Activated CD4-positive, alpha-beta memory T cell treated with anti-CD3 and anti-CD28 coated beads for 36 hours (primary cell): ENCODE measurements at regions of chr1 and their contacts with region 1.

Region 1: GRCh38 chr1:227563324-227564201 is at the start of gene ZNF678:
- DNase-seq: peak; percentile 95
- H3K4me3 Mint-ChIP-seq: peak within 1 kb of the TSS; percentile 96
- H3K27ac Mint-ChIP-seq: peak within 1 kb of the TSS; percentile 92
- H3K4me1 Mint-ChIP-seq: peaks cover 28% of the 10 kb centered on the region
- H3K27me3 Mint-ChIP-seq: peaks cover 22% of the 10 kb centered on the region
- total RNA-seq, gene ZNF678: 6.5 to 7.4 TPM

Region 2: GRCh38 chr1:226940029-226940805 is 623.3 kb before region 1 on chr1 and contains the start of gene COQ8A:
- CTCF ChIA-PET with region 1: no interaction called
- POLR2A ChIA-PET with region 1: no interaction called
- intact Hi-C with region 1: loop called (anchors 5 kb)
- DNase-seq: peak; percentile 99
- H3K4me3 Mint-ChIP-seq: peak within 1 kb of the TSS; percentile 82
- H3K27ac Mint-ChIP-seq: peak within 1 kb of the TSS; percentile 94
- H3K4me1 Mint-ChIP-seq: peaks cover 41% of the 10 kb centered on the region
- H3K27me3 Mint-ChIP-seq: no peaks in the 10 kb centered on the region
- total RNA-seq, gene COQ8A: 19.8 to 22.2 TPM

Region 3: GRCh38 chr1:227542143-227543120 is 21.1 kb before region 1 on chr1:
- CTCF ChIA-PET with region 1: interaction called, 37 read pairs
- POLR2A ChIA-PET with region 1: interaction called, 4 read pairs
- intact Hi-C with region 1: loop called (anchors 1 kb)
- DNase-seq: peak; percentile 92
- H3K4me3 Mint-ChIP-seq: no peak overlapping the region
- H3K27ac Mint-ChIP-seq: peak overlapping the region; percentile 30
- H3K4me1 Mint-ChIP-seq: peaks cover 6% of the 10 kb centered on the region
- H3K27me3 Mint-ChIP-seq: no peaks in the 10 kb centered on the region

Region 4: GRCh38 chr1:227707807-227708206 is 144.2 kb after region 1 on chr1:
- CTCF ChIA-PET with region 1: no interaction called
- POLR2A ChIA-PET with region 1: no interaction called
- intact Hi-C with region 1: loop called (anchors 5 kb)
- DNase-seq: no peak
- H3K4me3 Mint-ChIP-seq: no peak overlapping the region
- H3K27ac Mint-ChIP-seq: no peak overlapping the region
- H3K4me1 Mint-ChIP-seq: peaks cover 11% of the 10 kb centered on the region
- H3K27me3 Mint-ChIP-seq: no peaks in the 10 kb centered on the region

Region 5: GRCh38 chr1:227728059-227728891 is 164.7 kb after region 1 on chr1:
- CTCF ChIA-PET with region 1: no interaction called
- POLR2A ChIA-PET with region 1: no interaction called
- intact Hi-C with region 1: loop called (anchors 1 kb)
- DNase-seq: peak; percentile 86
- H3K4me3 Mint-ChIP-seq: peak overlapping the region; percentile 85
- H3K27ac Mint-ChIP-seq: peak overlapping the region; percentile 79
- H3K4me1 Mint-ChIP-seq: peaks cover 21% of the 10 kb centered on the region
- H3K27me3 Mint-ChIP-seq: peaks cover 4% of the 10 kb centered on the region

Region 6: GRCh38 chr1:227734856-227735538 is 171.4 kb after region 1 on chr1 and contains the starts of genes JMJD4 and SNAP47:
- CTCF ChIA-PET with region 1: no interaction called
- POLR2A ChIA-PET with region 1: interaction called, 4 read pairs
- intact Hi-C with region 1: loop called (anchors 1 kb)
- DNase-seq: peak; percentile 95
- H3K4me3 Mint-ChIP-seq: peak within 1 kb of the TSS; percentile 94
- H3K27ac Mint-ChIP-seq: peak within 1 kb of the TSS; percentile 79
- H3K4me1 Mint-ChIP-seq: peaks cover 40% of the 10 kb centered on the region
- H3K27me3 Mint-ChIP-seq: no peaks in the 10 kb centered on the region
- total RNA-seq, gene JMJD4: 15.2 to 16.1 TPM
- total RNA-seq, gene SNAP47: 30.9 to 32.5 TPM